Activated T-helper 2 cell treated with anti-CD3 and anti-CD28 coated beads, Interferon-gamma antibody, Interleukin-2, Interleukin-4, amounts not matched to agents 10 μg/mL and 5 μg/mL and 100 μg/mL, durations not matched to agents 14 hours and 24 hours and 36 hours (primary cell): ENCODE measurements at regions of chr18 and their contacts with region 1.

Region 1: DNA sequence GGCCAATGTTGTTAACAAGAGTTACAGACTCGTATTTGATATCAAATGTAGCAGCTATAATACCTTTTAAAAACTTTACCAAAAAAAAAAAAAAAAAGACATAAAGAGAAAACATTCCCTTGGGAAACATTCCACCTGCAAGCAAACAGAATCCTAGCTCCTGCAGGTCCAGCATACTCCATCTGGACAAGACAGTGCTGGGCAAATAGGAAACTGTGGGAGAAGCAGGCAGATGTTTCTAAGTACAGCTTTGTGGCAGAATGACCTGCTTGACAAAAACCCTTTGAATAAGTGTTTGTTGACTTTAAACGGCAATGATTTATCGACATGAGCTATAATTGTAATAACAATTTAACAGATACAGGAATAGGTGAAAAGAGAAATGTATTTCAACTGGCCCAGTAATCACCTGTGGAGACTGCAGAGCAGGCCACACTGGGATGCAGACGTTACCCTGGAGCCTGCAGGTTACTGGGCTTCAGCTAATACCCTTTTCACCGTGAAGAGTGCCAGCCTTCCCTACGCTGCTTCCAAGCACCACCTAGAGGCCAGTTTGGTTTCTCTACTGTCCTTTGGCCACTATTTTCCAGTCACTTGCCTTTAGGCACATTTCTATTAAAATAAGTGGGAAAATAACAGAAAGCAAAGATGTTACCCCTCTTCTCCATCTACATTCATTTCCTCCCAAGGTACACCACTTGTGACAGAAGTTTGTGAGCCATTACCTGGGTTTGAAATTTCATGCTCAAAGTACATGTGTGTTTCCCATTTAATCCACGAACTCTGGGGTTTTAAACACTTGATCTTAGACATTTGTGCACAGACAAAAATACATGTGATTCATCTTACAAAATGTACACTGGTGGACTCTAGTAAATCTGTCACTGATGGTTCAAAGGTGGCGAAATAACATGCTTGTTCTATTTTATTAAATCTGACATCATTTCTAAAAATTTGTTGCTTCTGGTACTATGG is 96.9 kb upstream of the ZNF397 start:
- DNase-seq: no peak
- H3K4me3 Mint-ChIP-seq: no peak overlapping the region
- H3K27ac Mint-ChIP-seq: no peak overlapping the region
- H3K4me1 Mint-ChIP-seq: no peaks in the 10 kb centered on the region
- H3K27me3 Mint-ChIP-seq: no peaks in the 10 kb centered on the region

Region 2: GRCh38 chr18:34999756-35000289 is 144.1 kb before region 1 on chr18:
- intact Hi-C with region 1: loop called (anchors 5 kb)
- DNase-seq: no peak
- H3K4me3 Mint-ChIP-seq: no peak overlapping the region
- H3K27ac Mint-ChIP-seq: no peak overlapping the region
- H3K4me1 Mint-ChIP-seq: no peaks in the 10 kb centered on the region
- H3K27me3 Mint-ChIP-seq: peaks cover 7% of the 10 kb centered on the region

Region 3: DNA sequence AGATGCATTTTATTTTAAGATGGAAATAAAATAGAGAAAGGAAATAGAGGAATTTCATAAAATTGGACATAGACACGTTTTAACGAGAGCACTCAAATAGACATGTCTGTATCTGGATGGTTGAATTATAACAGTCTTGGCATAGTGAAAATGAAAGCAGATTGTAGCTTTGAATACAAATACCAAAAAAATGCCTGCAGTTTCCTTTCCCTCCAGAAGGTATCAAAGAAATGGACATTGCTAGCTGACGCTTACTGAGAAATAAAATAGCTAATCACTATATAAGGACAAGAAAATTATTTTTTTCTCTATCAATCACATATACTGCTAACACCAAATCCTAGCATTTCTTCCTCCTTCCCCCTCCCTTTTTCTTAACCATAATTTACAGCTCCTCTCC is 114.1 kb before region 1 on chr18:
- intact Hi-C with region 1: loop called (anchors 1 kb)
- DNase-seq: no peak
- H3K4me3 Mint-ChIP-seq: peak overlapping the region; percentile 80
- H3K27ac Mint-ChIP-seq: peak overlapping the region; percentile 98
- H3K4me1 Mint-ChIP-seq: peaks cover 54% of the 10 kb centered on the region
- H3K27me3 Mint-ChIP-seq: no peaks in the 10 kb centered on the region